Astrocyte of the cerebellum (primary cell): ENCODE measurements at regions of chr3 and their contacts with region 1.

Region 1: GRCh38 chr3:137013955-137014688 is 56.3 kb downstream of the IL20RB start:
- DNase-seq: peak; percentile 78
- H3K4me3 ChIP-seq: peak overlapping the region; percentile 35
- CTCF ChIP-seq: peak; percentile 76

Region 2: DNA sequence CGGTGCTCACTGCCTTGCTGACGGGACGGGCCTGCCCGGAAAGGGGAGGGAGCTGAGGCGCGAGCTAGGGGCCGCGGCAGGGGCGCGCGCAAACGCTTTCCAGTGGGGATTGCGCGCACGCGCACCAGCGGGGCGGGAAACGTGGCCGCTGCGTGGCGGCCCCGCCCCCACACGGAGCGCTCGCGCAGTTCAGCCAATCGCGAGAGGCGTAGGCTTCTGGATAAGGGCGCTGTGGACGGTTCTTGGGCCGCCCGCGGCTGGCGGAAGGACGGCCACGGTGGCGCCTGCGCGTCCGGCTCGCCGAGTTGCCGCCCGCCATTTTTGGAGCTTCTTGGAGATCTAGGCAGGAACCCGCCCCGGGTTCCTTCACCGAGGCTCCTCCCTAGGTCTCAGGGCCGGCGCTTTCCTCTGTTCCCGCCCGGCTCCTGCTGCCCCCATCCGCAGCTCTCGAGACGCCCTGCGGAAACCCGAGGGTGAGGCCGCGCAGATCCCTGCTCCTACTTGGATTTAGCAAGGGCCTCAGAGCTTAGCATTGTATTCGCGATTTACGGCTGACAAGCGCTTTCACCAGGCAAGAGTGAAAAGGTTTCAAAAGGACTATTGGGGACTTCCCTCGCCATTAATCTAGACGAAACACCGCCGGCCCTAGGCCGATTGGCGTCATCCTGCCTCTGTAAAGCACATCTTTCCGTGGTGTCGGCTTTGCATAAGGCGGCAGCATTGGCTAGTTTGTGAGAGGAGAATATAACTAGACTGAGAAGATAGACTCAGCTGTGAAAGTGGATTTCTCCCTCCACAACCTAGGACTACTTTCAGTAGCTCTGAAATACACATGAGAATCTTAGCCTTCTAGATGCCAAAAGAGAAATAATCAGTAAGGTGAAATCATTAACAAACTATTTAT is 261.4 kb before region 1 on chr3:
- in situ Hi-C with region 1: loop called (anchors 10 kb)
- DNase-seq: peak; percentile 95
- H3K4me3 ChIP-seq: peak overlapping the region; percentile 65
- CTCF ChIP-seq: peak; percentile 36

Region 3: GRCh38 chr3:136919799-136920580 is 94.1 kb before region 1 on chr3:
- in situ Hi-C with region 1: no loop called
- DNase-seq: no peak
- H3K4me3 ChIP-seq: no peak overlapping the region
- CTCF ChIP-seq: no peak

Region 4: GRCh38 chr3:136955813-136956212 is 58.3 kb before region 1 on chr3:
- in situ Hi-C with region 1: no loop called
- DNase-seq: peak; percentile 70
- H3K4me3 ChIP-seq: no peak overlapping the region
- CTCF ChIP-seq: no peak

Region 5: DNA sequence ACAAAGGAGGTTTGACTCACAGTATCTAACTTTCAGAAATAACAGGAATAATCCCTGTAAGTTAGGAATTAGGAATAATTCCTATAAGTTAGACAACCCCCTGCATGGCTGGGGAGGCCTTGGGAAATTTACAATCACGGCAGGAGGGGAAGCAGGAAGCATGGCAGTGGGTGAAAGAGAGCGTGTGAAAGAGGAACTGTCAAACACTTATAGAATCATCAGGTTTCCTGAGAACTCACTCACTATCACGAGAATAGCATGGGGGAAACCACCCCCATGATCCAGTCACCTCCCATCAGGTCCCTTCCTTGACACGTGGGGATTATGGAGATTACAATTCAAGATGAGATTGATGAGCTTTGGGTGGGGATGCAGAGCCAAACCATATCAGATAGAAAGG is 329.2 kb after region 1 on chr3:
- in situ Hi-C with region 1: no loop called
- DNase-seq: no peak
- H3K4me3 ChIP-seq: no peak overlapping the region
- CTCF ChIP-seq: no peak